ENCODE measurements at regions of chr4 and their contacts with region 1.

Region 1: GRCh38 chr4:4248029-4248884 is at the start of gene TMEM128:
- DNase-seq: peak; percentile 97
- CTCF ChIP-seq: no peak

Region 2: GRCh38 chr4:4260253-4260652 is 12.0 kb after region 1 on chr4:
- CTCF ChIA-PET with region 1: interaction called, 16 read pairs
- POLR2A ChIA-PET with region 1: no interaction called
- DNase-seq: peak; percentile 50
- CTCF ChIP-seq: peak; percentile 16

Region 3: DNA sequence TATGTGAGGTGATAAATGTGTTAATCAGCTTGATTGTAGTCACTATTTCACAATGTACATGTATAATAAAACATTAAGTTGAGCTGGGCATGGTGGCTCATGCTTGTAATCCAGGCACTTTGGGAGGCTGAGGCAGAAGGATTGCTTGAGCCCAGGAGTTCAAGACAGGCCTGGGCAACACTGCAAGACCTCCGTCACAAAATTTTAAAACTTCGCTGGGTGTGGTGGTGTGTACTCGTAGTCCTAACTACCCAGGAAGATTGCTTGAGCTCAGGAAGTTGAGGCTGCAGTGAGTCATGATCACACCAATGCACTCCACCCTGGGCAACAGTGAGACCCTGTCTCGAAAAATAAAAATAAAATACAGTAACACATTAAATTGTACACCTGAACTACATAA is 21.6 kb after region 1 on chr4:
- CTCF ChIA-PET with region 1: interaction called, 17 read pairs
- POLR2A ChIA-PET with region 1: interaction called, 6 read pairs
- DNase-seq: no peak
- CTCF ChIP-seq: no peak

Region 4: DNA sequence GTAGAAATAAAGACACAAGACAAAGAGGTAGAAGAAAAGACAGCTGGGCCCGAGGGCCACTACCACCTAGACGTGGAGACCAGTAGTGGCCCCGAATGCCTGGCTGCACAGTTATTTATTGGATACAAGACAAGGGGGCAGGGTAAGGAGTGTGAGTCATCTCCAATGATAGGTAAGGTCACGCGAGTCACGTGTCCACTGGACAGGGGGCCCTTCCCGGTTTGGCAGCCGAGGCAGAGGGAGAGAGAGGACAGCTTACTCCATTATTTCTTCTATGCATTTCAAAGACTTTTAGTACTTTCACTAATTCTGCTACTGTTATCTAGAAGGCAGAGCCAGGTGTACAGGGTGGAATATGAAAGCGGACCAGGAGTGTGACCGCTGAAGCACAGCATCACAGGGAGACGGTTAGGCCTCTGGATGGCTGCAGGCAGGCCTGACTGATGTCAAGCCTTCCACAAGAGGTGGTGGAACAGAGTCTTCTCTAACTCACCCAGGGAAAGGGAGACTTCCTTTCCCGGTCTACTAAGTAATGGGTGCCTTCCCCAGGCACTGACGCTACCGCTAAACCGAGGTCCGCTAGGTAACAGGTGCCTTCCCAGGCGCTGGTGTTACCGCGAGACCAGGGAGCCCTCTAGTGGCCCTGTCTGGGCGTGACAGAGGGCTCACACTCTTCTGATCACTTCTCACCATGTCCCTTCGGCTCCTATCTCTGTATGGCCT is 86.7 kb after region 1 on chr4:
- CTCF ChIA-PET with region 1: interaction called, 31 read pairs
- POLR2A ChIA-PET with region 1: no interaction called
- DNase-seq: peak; percentile 70
- CTCF ChIP-seq: peak; percentile 87

Region 5: DNA sequence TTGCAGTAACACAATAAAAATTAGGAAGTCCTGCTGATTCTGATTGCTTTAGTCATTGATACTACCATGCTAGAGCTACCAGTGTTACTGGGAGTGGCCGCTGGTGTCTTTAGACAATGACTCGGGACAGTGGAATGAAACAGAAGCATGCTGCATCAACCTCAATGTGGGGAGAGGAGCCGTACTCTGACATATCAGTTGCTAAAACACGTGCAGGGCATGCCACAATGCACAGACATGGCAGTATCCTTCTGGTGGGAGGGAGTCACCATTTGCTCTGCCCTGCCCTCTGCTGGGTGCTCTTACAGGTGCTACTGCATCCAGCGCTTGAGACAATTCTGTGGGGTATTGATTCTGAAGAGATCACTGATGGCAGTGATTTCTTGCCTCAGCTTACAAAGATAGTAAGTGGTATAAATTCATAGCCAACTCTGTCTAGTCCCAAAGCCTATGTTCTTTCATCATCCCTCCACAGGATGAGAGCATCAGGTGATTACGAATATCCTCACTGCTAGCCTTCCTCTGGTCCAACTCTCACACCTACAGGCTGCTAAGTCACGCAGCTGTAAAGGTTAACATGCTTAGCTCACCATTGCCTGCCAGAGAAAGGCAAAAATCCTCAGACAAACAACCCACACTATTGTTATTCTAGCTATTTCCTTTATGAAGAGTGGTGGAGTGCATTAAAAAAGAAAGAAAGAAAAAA is 182.4 kb after region 1 on chr4:
- CTCF ChIA-PET with region 1: interaction called, 12 read pairs
- POLR2A ChIA-PET with region 1: no interaction called
- DNase-seq: peak; percentile 58
- CTCF ChIP-seq: peak; percentile 67

Measured in GM10248 (cell line).